Naive thymus-derived CD4-positive, alpha-beta T cell (primary cell): ENCODE measurements at regions of chr5 and their contacts with region 1.

Region 1: DNA sequence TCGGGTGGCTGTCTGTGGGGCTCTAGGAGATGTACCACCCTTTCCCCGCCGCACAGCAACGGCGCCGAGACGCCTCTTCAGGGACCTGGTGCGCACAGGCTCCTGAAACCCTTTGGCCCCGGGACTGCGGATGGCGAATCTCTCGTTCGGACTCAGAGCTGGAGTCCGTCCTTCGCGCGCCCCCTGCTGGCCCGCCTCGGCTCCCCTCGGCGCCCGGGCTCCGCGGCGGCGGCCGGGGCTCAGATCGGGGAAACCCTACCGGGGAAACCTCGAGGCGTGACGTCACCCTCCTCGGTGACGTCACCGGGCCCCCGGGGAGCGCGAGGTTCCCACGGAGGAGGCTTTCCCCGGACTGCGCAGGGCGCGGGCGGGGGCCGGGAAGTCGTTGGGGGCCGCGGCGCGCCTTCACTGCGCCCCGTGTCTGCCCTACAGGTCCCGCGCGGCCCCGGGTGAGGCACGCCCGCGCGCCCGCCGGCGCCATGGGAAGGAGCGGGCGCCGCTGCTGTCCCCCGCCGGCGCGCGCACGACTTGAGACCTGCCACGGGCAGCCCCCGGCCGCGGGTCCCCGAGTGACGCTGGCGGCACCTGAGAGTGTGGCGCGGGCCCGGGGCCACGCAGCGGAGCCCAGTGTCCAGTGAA is 7.9 kb downstream of the PRR7 start:
- DNase-seq: peak; percentile 83 to 98 (median 88)
- ATAC-seq: peak; percentile 68
- H3K4me3 ChIP-seq: peak overlapping the region; percentile 70
- H3K4me3 Mint-ChIP-seq: peak overlapping the region; percentile 66 to 92 (median 85)
- H3K27ac ChIP-seq: peak overlapping the region; percentile 97
- H3K27ac Mint-ChIP-seq: peak overlapping the region in 7 of 9 donors; percentile 51 to 95 (median 90)
- H3K4me1 ChIP-seq: peaks cover 12% of the 10 kb centered on the region in 2 donors
- H3K4me1 Mint-ChIP-seq: peaks cover 10 to 27% (median 17%) of the 10 kb centered on the region in 7 donors
- H3K27me3 ChIP-seq: no peaks in the 10 kb centered on the region
- H3K27me3 Mint-ChIP-seq: peaks cover 0 to 22% (median 0%) of the 10 kb centered on the region in 5 donors

Region 2: DNA sequence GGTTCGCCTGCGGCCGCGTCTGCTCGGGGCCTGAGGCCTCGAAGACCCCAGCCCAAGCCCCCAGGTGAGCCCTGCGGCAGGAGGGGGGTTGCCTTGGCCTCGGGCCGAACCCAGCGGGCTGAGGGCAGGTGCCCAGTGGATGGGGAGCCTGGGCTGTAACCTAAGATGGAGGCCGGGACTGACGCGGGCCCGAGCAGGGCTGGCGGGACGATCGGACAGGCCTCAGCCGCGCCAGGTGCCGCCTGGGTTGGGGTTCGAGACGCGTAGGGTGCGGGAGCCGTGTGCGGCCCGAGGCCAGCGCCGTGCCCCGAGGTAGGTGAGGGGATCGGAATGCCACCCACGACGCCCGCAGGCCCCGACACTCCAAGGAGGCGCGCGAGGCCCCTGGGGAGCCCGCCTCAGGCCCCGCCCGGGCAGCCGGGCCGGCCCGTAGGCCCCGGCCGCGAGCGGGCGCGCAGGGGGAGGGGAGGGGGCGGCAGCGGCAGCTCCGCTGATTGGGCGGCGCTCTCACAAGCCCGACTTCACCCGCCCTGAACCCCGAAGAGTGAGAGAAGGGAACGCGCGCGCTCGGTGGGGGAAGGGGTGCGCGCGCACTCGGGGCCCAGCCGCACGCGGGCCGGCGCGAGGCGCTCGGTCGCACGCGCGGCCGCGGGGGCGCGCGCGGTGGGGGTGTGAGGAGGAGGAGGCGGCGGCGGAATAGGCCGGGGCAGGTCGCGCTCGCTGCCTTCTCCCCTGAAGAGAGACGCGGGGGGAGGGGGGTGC is 321.2 kb before region 1 on chr5 and contains the start of gene NSD1:
- CTCF ChIA-PET with region 1: no interaction called
- POLR2A ChIA-PET with region 1: interaction called, 3 read pairs
- intact Hi-C with region 1: loop called (anchors 1 to 5 kb)
- DNase-seq: peak; percentile 86 to 94 (median 93)
- ATAC-seq: peak; percentile 89
- H3K4me3 ChIP-seq: peak within 1 kb of the TSS; percentile 61
- H3K4me3 Mint-ChIP-seq: peak within 1 kb of the TSS; percentile 60 to 88 (median 85)
- H3K27ac ChIP-seq: peak within 1 kb of the TSS; percentile 80
- H3K27ac Mint-ChIP-seq: peak within 1 kb of the TSS; percentile 48 to 95 (median 89)
- H3K4me1 ChIP-seq: peaks cover 47 to 57% of the 10 kb centered on the region in 2 donors
- H3K4me1 Mint-ChIP-seq: peaks cover 34 to 72% (median 65%) of the 10 kb centered on the region in 7 donors
- H3K27me3 ChIP-seq: no peaks in the 10 kb centered on the region
- H3K27me3 Mint-ChIP-seq: no peaks in the 10 kb centered on the region
- total RNA-seq, gene NSD1: 105 to 126 (median 117) TPM

Region 3: DNA sequence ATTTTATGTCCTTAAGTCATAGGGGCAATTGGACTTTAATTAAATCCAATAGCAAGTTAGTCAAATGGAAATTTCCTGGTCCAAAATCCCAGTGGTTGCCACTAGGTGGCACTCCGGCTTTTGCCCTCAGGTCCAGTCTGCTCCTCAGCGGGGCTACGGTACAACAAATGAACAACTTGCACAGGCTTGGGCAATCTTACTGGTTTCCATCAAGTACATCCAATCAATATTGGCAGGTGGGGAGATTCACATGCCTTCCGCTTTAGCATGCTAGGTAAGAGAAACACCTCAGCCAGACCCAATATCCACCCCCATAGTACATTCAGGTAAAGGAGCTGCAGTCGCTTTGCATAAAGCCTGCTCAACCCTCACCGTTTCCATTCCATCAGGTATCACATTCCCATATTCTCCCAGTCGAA is 136.5 kb before region 1 on chr5:
- CTCF ChIA-PET with region 1: interaction called, 7 read pairs
- POLR2A ChIA-PET with region 1: interaction called, 3 read pairs
- intact Hi-C with region 1: loop called (anchors 1 kb)
- DNase-seq: peak; percentile 41 to 73 (median 69)
- ATAC-seq: peak; percentile 84
- H3K4me3 ChIP-seq: no peak overlapping the region
- H3K4me3 Mint-ChIP-seq: no peak overlapping the region
- H3K27ac ChIP-seq: no peak overlapping the region
- H3K27ac Mint-ChIP-seq: peak overlapping the region in 2 of 9 donors; percentile 32 to 37
- H3K4me1 ChIP-seq: peaks cover 1% of the 10 kb centered on the region in 2 donors
- H3K4me1 Mint-ChIP-seq: peaks cover 0 to 49% (median 20%) of the 10 kb centered on the region in 7 donors
- H3K27me3 ChIP-seq: no peaks in the 10 kb centered on the region
- H3K27me3 Mint-ChIP-seq: no peaks in the 10 kb centered on the region

Region 4: DNA sequence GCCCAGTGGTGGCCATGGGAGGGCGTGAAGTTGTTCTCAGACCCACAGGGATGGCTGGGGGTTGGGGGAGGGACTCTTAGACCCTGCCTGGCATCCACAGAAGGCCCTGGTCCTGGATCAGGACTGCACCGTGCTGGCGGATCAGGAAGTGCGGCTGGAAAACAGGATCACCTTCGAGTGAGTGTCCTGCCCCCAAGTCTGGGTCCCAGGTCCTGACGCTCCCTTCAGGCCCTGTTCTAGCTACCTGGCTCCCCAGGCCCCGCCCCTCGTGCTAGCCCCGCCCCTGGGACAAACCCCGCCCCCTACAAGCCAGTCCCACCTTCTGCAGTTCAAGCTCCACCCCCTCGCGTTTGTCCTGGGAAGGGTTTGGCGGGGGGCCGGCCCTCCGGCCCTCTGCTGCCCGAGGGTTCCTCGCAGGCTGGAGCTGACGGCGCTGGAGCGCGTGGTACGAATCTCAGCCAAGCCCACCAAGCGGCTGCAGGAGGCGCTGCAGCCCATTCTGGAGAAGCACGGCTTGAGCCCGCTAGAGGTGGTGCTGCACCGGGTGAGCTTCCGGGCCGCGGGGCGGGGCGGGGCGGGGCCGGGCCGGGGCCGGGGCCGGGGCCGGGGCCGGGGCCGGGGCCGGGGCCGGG is 83.9 kb before region 1 on chr5:
- CTCF ChIA-PET with region 1: interaction called, 14 read pairs
- POLR2A ChIA-PET with region 1: interaction called, 19 read pairs
- intact Hi-C with region 1: no loop called
- DNase-seq: peak in 7 of 9 donors; percentile 36 to 74 (median 65)
- ATAC-seq: peak; percentile 90
- H3K4me3 ChIP-seq: no peak overlapping the region
- H3K4me3 Mint-ChIP-seq: peak overlapping the region in 7 of 10 donors; percentile 20 to 79 (median 64)
- H3K27ac ChIP-seq: peak overlapping the region; percentile 76
- H3K27ac Mint-ChIP-seq: peak overlapping the region in 7 of 9 donors; percentile 33 to 94 (median 86)
- H3K4me1 ChIP-seq: peaks cover 36 to 73% of the 10 kb centered on the region in 2 donors
- H3K4me1 Mint-ChIP-seq: peaks cover 51 to 80% (median 70%) of the 10 kb centered on the region in 7 donors
- H3K27me3 ChIP-seq: no peaks in the 10 kb centered on the region
- H3K27me3 Mint-ChIP-seq: no peaks in the 10 kb centered on the region

Region 5: GRCh38 chr5:177412603-177413233 is 41.8 kb before region 1 on chr5:
- CTCF ChIA-PET with region 1: interaction called, 189 read pairs
- POLR2A ChIA-PET with region 1: interaction called, 804 read pairs
- intact Hi-C with region 1: no loop called
- DNase-seq: no peak
- ATAC-seq: peak; percentile 34
- H3K4me3 ChIP-seq: no peak overlapping the region
- H3K4me3 Mint-ChIP-seq: peak overlapping the region in 2 of 10 donors; percentile 7 to 21
- H3K27ac ChIP-seq: no peak overlapping the region
- H3K27ac Mint-ChIP-seq: peak overlapping the region in 2 of 9 donors; percentile 46 to 55
- H3K4me1 ChIP-seq: peaks cover 14 to 24% of the 10 kb centered on the region in 2 donors
- H3K4me1 Mint-ChIP-seq: peaks cover 8 to 37% (median 26%) of the 10 kb centered on the region in 7 donors
- H3K27me3 ChIP-seq: no peaks in the 10 kb centered on the region
- H3K27me3 Mint-ChIP-seq: peaks cover 0 to 3% (median 0%) of the 10 kb centered on the region in 5 donors

Region 6: DNA sequence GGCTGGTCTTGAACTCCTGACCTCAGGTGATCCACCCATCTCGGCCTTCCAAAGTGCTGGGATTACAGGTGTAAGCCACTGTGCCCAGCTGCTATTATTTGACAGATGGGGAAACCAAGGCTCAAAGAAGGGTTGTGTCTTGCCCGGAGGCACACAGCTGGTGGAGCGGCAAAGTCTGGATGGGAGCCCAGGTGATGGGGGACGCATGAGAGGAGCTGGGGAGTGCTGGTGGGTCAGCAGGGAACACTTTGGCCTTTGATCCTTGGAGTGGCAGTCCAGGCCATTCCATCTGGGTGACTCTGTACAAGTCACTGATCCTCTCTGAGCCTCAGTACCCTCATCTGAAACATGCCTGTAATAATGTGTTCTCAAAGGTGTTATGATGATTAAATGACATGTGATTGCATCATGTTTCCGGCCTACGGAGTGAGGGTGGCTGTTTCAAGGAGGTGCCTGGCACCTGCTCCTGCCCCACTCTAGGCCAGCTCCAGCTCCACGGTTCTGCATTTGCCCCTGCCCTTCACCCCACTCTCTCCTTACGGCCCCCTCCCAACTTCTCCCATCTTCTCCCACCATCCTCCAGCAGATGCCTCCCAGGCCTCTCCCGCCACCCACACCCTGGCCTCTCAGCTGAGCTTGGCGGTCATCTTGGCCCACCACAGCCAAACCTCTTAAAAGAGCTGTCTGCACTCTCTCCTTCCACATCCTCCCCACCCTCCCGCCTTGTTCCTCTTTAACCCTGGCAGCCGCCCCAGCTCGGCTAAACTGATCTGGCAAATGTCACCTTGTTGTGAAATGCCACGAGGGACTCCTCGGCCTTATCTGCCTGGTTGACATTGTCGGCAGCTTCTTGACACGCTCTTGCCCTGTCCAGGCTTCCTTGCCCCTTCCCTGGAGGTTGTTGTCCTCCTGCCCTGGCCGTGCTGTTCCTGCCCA is 24.5 kb after region 1 on chr5:
- CTCF ChIA-PET with region 1: interaction called, 4 read pairs
- POLR2A ChIA-PET with region 1: interaction called, 4 read pairs
- intact Hi-C with region 1: loop called in 1 of 2 experiments (anchors 2 kb)
- DNase-seq: peak in 5 of 9 donors; percentile 26 to 48 (median 33)
- ATAC-seq: peak; percentile 80
- H3K4me3 ChIP-seq: no peak overlapping the region
- H3K4me3 Mint-ChIP-seq: peak overlapping the region in 8 of 10 donors; percentile 7 to 62 (median 32)
- H3K27ac ChIP-seq: peak overlapping the region; percentile 41
- H3K27ac Mint-ChIP-seq: peak overlapping the region; percentile 82 to 95 (median 90)
- H3K4me1 ChIP-seq: peaks cover 0 to 24% of the 10 kb centered on the region in 2 donors
- H3K4me1 Mint-ChIP-seq: peaks cover 29 to 47% (median 42%) of the 10 kb centered on the region in 7 donors
- H3K27me3 ChIP-seq: no peaks in the 10 kb centered on the region
- H3K27me3 Mint-ChIP-seq: peaks cover 0 to 7% (median 0%) of the 10 kb centered on the region in 5 donors

Region 7: DNA sequence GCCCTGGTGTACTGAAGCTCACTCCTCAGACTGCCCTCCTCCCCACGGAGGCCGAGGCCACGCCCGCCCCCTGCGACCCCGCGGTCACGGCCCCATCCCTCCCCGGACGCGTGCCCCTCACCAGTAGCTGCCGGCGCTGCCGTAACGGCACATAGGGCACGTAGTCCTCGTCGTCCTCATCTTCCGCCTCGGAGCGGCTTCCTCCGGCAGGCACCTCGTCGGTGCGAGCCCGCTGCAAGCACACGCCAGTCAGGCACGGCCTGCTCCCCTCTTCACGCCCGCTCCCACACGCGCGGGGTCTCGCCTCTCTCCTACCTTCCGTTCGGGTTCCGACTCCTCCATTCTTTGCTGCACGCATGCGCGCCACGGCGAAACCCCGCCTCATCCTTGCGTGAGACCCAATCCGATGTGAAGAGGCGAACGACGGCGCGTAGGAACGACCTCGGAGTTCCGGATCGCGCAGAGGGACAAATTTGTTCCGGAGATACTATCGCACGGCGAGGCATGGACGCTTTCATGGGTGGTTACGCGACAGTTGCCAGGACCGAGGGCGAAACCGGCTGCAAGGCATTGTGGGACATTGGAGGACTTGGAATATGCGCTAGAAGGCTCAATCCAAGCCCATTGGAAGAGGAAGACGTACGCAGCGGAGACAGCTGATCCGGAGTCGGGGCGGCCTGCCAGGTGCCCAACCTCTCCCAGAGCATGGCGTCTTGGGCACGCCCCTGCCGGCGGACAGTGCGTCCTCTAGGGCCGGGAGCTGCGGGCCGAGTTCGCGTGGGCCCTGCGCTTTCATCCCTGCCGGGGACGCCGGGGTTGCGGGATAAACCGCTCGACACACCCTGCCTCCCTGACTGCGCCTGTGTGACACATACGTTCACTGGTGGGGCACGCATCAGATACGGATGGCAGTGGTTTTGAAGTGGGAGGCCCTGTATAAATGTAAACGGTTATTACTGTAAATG is 62.4 kb after region 1 on chr5 and contains the start of gene DDX41:
- CTCF ChIA-PET with region 1: no interaction called
- POLR2A ChIA-PET with region 1: no interaction called
- intact Hi-C with region 1: loop called in 1 of 2 experiments (anchors 5 kb)
- DNase-seq: peak; percentile 88 to 96 (median 95)
- ATAC-seq: peak; percentile 92
- H3K4me3 ChIP-seq: peak within 1 kb of the TSS; percentile 76
- H3K4me3 Mint-ChIP-seq: peak within 1 kb of the TSS; percentile 92 to 99 (median 96)
- H3K27ac ChIP-seq: peak within 1 kb of the TSS; percentile 79
- H3K27ac Mint-ChIP-seq: peak within 1 kb of the TSS; percentile 85 to 97 (median 92)
- H3K4me1 ChIP-seq: peaks cover 15 to 17% of the 10 kb centered on the region in 2 donors
- H3K4me1 Mint-ChIP-seq: peaks cover 42 to 58% (median 52%) of the 10 kb centered on the region in 7 donors
- H3K27me3 ChIP-seq: no peaks in the 10 kb centered on the region
- H3K27me3 Mint-ChIP-seq: peaks cover 0 to 2% (median 0%) of the 10 kb centered on the region in 5 donors
- total RNA-seq, gene DDX41: 65.8 to 126 (median 76.1) TPM